ENCODE measurements at regions of chr18 and their contacts with region 1.

Region 1: GRCh38 chr18:9575558-9575957 is 38.8 kb downstream of the PPP4R1 start:
- DNase-seq: peak; percentile 73 to 74
- H3K4me3 ChIP-seq: no peak overlapping the region
- H3K4me3 Mint-ChIP-seq: no peak overlapping the region
- H3K27ac Mint-ChIP-seq: no peak overlapping the region
- H3K4me1 ChIP-seq: no peaks in the 10 kb centered on the region
- H3K4me1 Mint-ChIP-seq: peaks cover 4% of the 10 kb centered on the region
- H3K27me3 ChIP-seq: no peaks in the 10 kb centered on the region
- H3K27me3 Mint-ChIP-seq: no peaks in the 10 kb centered on the region
- CTCF ChIP-seq: peak; percentile 72 to 83

Region 2: GRCh38 chr18:9535382-9535991 is 40.1 kb before region 1 on chr18:
- CTCF ChIA-PET with region 1: no interaction called
- POLR2A ChIA-PET with region 1: no interaction called
- intact Hi-C with region 1: no loop called
- DNase-seq: peak; percentile 66 to 71
- H3K4me3 ChIP-seq: no peak overlapping the region
- H3K4me3 Mint-ChIP-seq: peak overlapping the region; percentile 22
- H3K27ac Mint-ChIP-seq: peak overlapping the region; percentile 7
- H3K4me1 ChIP-seq: peaks cover 10% of the 10 kb centered on the region
- H3K4me1 Mint-ChIP-seq: peaks cover 7% of the 10 kb centered on the region
- H3K27me3 ChIP-seq: no peaks in the 10 kb centered on the region
- H3K27me3 Mint-ChIP-seq: no peaks in the 10 kb centered on the region
- CTCF ChIP-seq: no peak

Region 3: GRCh38 chr18:9613550-9614400 is 38.2 kb after region 1 on chr18:
- CTCF ChIA-PET with region 1: interaction called, 4 read pairs
- POLR2A ChIA-PET with region 1: no interaction called
- intact Hi-C with region 1: loop called (anchors 2 kb)
- DNase-seq: peak; percentile 70 to 84
- H3K4me3 ChIP-seq: peak overlapping the region; percentile 79
- H3K4me3 Mint-ChIP-seq: peak overlapping the region; percentile 99
- H3K27ac Mint-ChIP-seq: peak overlapping the region; percentile 94
- H3K4me1 ChIP-seq: peaks cover 35% of the 10 kb centered on the region
- H3K4me1 Mint-ChIP-seq: peaks cover 30% of the 10 kb centered on the region
- H3K27me3 ChIP-seq: no peaks in the 10 kb centered on the region
- H3K27me3 Mint-ChIP-seq: no peaks in the 10 kb centered on the region
- CTCF ChIP-seq: no peak

Region 4: DNA sequence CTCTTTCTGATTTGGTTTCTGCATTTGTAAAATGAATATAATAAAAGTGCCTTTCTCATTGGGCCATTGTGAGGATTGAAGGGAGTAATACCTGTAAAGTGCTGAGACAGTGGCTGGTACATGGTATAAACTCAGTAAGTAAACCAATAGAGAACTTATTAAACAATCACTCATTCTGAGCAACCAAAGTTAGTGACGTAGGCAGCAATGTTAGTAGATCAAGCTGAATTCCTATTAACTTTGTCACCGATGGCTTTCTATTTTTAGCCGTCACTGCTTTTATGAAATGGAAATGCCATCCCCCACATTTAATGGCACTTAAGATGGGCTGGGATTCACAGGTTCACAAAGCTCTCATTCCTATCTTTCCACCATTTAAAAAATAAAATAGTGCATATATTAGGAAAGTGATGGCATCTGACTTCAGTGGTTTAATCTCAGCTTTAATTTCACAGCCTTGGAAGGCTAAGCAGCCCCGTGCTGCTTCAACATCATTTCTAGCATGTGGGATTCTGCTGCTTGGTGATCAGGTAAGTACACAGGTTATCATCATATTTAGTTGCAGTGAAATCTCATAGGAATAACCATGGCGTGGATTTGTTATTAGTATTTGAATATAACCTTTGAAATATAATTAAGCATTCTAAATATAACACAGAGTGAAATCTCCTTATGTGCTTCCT is 56.4 kb after region 1 on chr18:
- CTCF ChIA-PET with region 1: no interaction called
- POLR2A ChIA-PET with region 1: no interaction called
- intact Hi-C with region 1: no loop called
- DNase-seq: no peak
- H3K4me3 ChIP-seq: no peak overlapping the region
- H3K4me3 Mint-ChIP-seq: no peak overlapping the region
- H3K27ac Mint-ChIP-seq: no peak overlapping the region
- H3K4me1 ChIP-seq: peaks cover 27% of the 10 kb centered on the region
- H3K4me1 Mint-ChIP-seq: peaks cover 15% of the 10 kb centered on the region
- H3K27me3 ChIP-seq: no peaks in the 10 kb centered on the region
- H3K27me3 Mint-ChIP-seq: no peaks in the 10 kb centered on the region
- CTCF ChIP-seq: no peak

Region 5: GRCh38 chr18:9661564-9661963 is 86.0 kb after region 1 on chr18:
- CTCF ChIA-PET with region 1: interaction called, 24 read pairs
- POLR2A ChIA-PET with region 1: no interaction called
- intact Hi-C with region 1: loop called (anchors 1 kb)
- DNase-seq: peak in 1 of 2 experiments; percentile 20
- H3K4me3 ChIP-seq: no peak overlapping the region
- H3K4me3 Mint-ChIP-seq: no peak overlapping the region
- H3K27ac Mint-ChIP-seq: no peak overlapping the region
- H3K4me1 ChIP-seq: peaks cover 10% of the 10 kb centered on the region
- H3K4me1 Mint-ChIP-seq: peaks cover 20% of the 10 kb centered on the region
- H3K27me3 ChIP-seq: no peaks in the 10 kb centered on the region
- H3K27me3 Mint-ChIP-seq: no peaks in the 10 kb centered on the region
- CTCF ChIP-seq: peak; percentile 22 to 31

Region 6: DNA sequence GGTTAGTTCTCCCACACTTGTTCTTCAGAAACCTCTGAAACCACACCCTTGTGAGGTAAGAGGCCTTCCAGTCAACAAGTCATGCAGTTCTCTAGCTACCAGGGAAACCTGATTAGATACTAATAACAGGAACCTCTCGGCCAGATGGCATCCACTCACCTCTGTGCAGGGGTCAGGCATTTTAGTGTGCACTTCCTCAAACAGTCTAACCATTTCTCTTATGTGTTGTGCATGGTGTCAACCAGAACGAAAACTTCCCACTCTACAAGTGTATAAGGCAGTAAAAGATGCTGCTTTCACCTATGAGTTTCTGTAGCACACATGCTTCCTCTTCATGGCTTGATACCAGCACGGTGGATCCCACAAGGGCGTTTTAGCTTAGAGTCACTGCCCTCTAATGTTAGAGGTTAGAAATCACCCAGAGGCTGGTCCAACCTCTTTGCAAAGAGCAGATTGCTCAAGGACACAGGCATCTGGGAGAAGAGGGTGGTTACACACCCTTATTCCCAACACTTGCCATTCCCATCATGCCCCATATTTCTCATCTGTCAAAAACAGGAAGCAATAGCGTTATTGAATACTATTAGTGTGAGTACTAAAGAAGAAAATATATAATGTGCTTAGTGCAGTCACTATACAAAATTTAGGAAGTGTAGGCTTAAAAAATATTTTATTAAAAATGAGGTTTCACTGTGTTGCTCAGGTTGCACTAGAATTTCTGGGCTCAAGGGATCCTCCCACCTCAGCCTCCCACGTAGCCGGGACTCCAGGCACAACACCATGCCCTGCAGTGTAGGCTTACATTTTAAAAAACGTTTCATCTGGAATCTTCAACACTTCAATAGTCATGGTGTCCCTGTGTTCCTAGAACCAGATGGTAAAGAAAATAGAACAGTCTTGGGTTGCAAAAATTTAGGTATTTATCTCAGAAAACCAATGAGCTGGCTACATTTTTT is 98.0 kb after region 1 on chr18:
- CTCF ChIA-PET with region 1: interaction called, 21 read pairs
- POLR2A ChIA-PET with region 1: interaction called, 8 read pairs
- intact Hi-C with region 1: loop called (anchors 1 kb)
- DNase-seq: peak; percentile 85 to 87
- H3K4me3 ChIP-seq: no peak overlapping the region
- H3K4me3 Mint-ChIP-seq: peak overlapping the region; percentile 67
- H3K27ac Mint-ChIP-seq: peak overlapping the region; percentile 96
- H3K4me1 ChIP-seq: peaks cover 5% of the 10 kb centered on the region
- H3K4me1 Mint-ChIP-seq: peaks cover 26% of the 10 kb centered on the region
- H3K27me3 ChIP-seq: no peaks in the 10 kb centered on the region
- H3K27me3 Mint-ChIP-seq: no peaks in the 10 kb centered on the region
- CTCF ChIP-seq: peak; percentile 18 to 46

Region 7: DNA sequence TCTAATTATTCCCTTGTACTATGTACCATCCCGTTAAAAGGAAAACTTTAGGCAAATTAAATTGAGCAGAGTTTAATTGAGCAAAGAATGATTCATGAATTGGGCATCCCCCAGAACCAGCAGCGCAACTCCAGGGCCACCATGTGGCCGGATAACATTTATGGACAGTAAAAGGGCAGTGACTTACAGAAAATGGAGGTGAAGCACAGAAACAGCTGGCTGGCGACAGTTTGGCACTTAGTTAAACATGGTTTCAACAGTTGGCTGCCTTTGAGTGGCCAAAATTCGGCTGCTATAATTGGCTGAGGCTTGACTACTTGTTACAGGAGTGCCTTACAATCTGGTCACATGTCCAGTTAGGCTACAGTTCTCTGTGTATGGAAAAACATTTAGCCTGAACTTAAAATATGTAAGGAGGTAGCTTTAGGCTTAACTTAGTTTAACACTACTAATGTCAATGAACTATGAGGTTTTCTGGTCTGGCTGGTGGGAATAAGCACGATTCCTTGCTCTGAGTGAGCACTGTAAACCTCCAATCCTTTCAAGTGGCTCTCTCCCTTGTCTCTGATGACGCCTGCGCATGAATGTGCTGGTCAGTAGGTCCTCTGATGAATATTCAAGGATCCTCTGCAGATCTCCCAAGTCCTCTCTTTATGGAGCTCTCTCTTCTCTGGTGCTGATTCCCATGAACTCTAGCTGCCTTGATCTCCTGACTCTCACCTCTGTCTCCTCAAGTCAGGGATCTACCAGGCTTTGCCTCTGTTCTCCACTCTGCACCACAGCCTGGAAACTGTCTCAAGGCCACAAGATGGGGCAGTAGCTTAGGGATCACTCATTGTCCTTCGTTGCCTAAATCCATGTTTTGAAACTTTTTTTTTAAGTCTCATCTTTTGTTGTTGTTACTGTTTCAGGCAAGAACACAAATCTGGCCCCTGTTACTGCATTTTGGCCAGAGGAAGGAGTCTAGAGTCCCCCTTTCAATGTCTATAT is 108.1 kb after region 1 on chr18:
- CTCF ChIA-PET with region 1: interaction called, 7 read pairs
- POLR2A ChIA-PET with region 1: no interaction called
- intact Hi-C with region 1: loop called (anchors 1 kb)
- DNase-seq: peak; percentile 48 to 51
- H3K4me3 ChIP-seq: no peak overlapping the region
- H3K4me3 Mint-ChIP-seq: no peak overlapping the region
- H3K27ac Mint-ChIP-seq: peak overlapping the region; percentile 5
- H3K4me1 ChIP-seq: peaks cover 12% of the 10 kb centered on the region; the same call in 1 of the 2 replicates
- H3K4me1 Mint-ChIP-seq: peaks cover 11% of the 10 kb centered on the region
- H3K27me3 ChIP-seq: no peaks in the 10 kb centered on the region
- H3K27me3 Mint-ChIP-seq: no peaks in the 10 kb centered on the region
- CTCF ChIP-seq: peak in 1 of 2 experiments; percentile 49

Region 8: DNA sequence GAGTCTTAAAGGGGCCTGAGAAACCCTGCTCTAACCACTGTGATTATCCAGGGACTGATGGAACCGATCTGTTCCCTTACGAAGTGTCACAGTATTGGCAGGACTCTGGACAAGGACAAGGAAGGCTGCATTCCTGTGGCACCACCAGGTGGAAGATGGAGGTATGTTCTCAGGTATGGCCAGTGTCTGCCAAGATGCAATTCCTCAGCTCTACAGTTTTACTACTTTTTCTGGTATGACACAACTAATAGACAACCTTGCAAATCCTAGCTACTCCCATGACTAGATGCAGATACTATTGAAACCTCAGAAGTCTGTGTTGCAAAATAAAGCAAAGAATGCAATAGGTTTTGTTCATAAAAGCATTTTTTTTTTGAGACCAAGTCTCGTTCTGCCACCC is 147.1 kb after region 1 on chr18:
- CTCF ChIA-PET with region 1: interaction called, 22 read pairs
- POLR2A ChIA-PET with region 1: no interaction called
- intact Hi-C with region 1: loop called (anchors 1 kb)
- DNase-seq: peak; percentile 74 to 78
- H3K4me3 ChIP-seq: no peak overlapping the region
- H3K4me3 Mint-ChIP-seq: no peak overlapping the region
- H3K27ac Mint-ChIP-seq: no peak overlapping the region
- H3K4me1 ChIP-seq: no peaks in the 10 kb centered on the region
- H3K4me1 Mint-ChIP-seq: peaks cover 11% of the 10 kb centered on the region
- H3K27me3 ChIP-seq: no peaks in the 10 kb centered on the region
- H3K27me3 Mint-ChIP-seq: no peaks in the 10 kb centered on the region
- CTCF ChIP-seq: peak; percentile 69 to 81

Region 9: DNA sequence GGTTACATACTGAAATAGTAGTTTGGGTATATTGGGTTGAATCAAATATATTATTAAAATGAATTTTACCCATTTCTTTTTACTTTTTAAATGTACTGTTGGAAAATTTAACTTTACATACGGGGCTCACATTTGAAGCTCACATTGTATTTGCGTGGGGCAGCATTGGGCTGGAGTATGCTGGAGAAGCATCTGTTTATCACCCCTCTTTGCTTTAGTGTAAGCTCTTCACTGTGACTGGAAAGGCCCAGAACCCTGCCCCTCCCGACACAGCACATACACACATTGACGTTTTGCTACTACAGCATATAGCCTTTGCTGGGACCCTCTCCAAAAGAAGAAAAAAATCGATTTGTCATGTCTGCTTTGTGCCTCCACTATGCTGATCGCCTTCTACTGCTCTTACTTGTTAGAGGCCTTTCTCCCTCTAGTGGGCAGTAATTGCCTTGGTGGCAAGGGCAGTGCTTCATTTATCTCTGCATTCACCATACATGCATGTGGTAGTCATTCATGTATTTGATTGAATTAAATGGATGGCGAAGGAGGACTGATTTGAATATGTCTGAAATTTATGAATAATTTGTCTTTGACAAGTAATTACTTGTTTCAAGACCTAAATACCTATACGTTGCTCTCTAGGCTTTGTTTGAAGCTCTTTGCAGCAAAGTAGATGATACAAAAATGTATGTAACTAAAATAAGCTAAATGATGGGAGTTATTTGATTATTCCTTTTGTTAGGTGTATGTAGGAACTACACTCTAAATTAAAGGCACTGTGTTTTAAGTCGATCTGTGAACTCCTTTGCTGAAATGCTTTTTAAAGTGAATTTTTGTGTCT is 375.7 kb after region 1 on chr18:
- CTCF ChIA-PET with region 1: no interaction called
- POLR2A ChIA-PET with region 1: no interaction called
- intact Hi-C with region 1: loop called (anchors 10 kb)
- DNase-seq: peak; percentile 54 to 58
- H3K4me3 ChIP-seq: no peak overlapping the region
- H3K4me3 Mint-ChIP-seq: no peak overlapping the region
- H3K27ac Mint-ChIP-seq: no peak overlapping the region
- H3K4me1 ChIP-seq: no peaks in the 10 kb centered on the region
- H3K4me1 Mint-ChIP-seq: no peaks in the 10 kb centered on the region
- H3K27me3 ChIP-seq: no peaks in the 10 kb centered on the region
- H3K27me3 Mint-ChIP-seq: no peaks in the 10 kb centered on the region
- CTCF ChIP-seq: peak; percentile 68 to 71